ENCODE measurements at regions of chr7 and their contacts with region 1.

Region 1: DNA sequence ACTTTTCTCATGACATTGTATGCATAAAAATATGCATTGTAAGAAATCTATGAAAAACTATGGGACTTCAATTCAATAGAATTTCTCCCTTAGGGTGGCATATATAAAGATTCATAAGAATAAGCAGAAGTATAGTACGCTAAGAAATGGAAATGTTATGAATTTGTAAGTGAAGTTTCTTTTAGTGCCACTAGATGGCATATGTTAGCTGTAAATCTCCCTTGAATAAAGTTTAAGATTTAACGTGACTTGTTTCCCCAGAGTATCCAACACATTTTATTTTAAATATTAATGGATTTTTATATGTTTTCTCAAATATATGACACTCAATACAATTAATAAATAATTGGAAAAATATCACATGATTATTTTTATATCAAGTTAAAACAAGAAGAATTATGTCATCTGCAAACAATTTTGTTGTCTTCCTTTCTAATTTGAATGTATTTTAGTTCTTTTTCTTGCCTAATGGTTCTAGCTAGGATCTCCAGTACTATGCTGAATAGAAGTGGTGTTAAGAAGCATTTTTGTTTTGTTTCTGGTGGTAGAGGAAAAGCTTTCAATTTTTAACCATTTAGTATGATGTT is 287.2 kb downstream of the HGF start:
- DNase-seq: no peak
- ATAC-seq: peak in 1 of 4 donors; percentile 37
- H3K4me3 ChIP-seq: no peak overlapping the region
- H3K27ac ChIP-seq: no peak overlapping the region
- H3K4me1 ChIP-seq: peaks cover 0 to 21% (median 4%) of the 10 kb centered on the region in 12 donors
- H3K27me3 ChIP-seq: no peaks in the 10 kb centered on the region
- CTCF ChIP-seq: peak; percentile 51 to 79 (median 70)
- POLR2A ChIP-seq: no peak

Region 2: GRCh38 chr7:81094952-81095351 is 387.7 kb before region 1 on chr7:
- intact Hi-C with region 1: no loop called
- DNase-seq: no peak
- ATAC-seq: no peak
- H3K4me3 ChIP-seq: no peak overlapping the region
- H3K27ac ChIP-seq: no peak overlapping the region
- H3K4me1 ChIP-seq: no peaks in the 10 kb centered on the region
- H3K27me3 ChIP-seq: no peaks in the 10 kb centered on the region
- CTCF ChIP-seq: no peak
- POLR2A ChIP-seq: no peak

Region 3: DNA sequence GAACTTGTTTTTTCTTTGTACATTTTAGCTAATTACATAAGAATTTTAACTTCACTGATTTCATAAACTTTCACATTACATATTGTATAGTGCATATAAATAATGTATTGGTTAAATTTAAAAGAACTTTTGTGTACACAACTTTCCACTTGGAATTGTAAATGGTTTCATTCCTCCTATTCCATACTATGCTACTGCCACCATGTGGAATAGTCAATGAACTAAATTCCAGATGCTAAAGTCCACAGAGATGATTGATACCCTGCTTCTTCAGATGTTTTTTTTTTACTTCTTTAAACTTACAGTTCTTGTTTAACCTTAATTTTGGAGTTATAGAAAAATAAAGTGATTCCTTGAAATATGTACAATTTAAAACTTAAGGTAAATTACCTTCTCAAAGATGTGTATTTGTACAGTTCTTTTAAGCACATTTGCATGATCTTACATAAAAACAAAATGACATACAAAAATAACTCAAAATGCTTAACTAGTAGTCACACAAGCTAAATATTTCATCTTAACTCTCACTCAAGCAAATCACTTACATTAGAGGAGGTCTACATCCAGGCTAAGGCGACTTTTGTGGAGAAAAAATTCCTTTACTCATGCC is 534.7 kb after region 1 on chr7:
- intact Hi-C with region 1: loop called in 6 of 10 experiments (anchors 5 to 10 kb)
- DNase-seq: no peak
- ATAC-seq: no peak
- H3K4me3 ChIP-seq: no peak overlapping the region
- H3K27ac ChIP-seq: no peak overlapping the region
- H3K4me1 ChIP-seq: peaks cover 0 to 28% (median 2%) of the 10 kb centered on the region in 12 donors
- H3K27me3 ChIP-seq: no peaks in the 10 kb centered on the region
- CTCF ChIP-seq: peak; percentile 11 to 55 (median 42)
- POLR2A ChIP-seq: no peak

Region 4: DNA sequence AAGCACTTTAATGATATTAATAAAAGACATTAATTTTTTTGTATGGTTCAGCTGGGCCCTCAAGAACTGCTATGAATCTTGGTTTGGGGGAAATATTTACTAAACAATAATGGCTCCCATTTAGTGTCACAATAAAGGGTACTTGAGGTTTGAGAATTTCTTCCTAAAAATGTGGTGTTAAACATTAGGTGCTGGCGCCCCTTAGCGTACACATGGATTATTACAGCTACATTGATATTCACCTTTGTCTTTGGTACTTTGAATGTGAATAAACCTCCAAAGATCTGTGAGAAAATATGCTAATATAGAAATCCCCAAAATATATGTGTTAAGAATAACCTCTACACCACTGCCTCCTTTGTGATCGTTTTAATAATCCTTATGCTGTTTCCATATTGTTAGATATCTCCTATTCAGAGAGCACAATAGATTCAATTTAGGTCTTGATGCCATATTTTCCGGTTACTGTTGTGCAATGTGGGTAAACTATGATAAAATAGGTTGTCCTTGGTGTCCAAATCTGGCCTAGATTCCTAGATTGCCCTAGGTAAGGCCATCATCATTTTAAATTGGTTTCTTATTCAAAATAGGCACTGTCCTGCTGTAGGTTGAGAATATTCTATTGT is 1122.7 kb after region 1 on chr7:
- intact Hi-C with region 1: loop called in 2 of 10 experiments (anchors 5 to 10 kb)
- DNase-seq: no peak
- ATAC-seq: no peak
- H3K4me3 ChIP-seq: no peak overlapping the region
- H3K27ac ChIP-seq: no peak overlapping the region
- H3K4me1 ChIP-seq: no peaks in the 10 kb centered on the region
- H3K27me3 ChIP-seq: no peaks in the 10 kb centered on the region
- CTCF ChIP-seq: peak; percentile 50 to 82 (median 68)
- POLR2A ChIP-seq: no peak

Measured in heart left ventricle (tissue), 16 donors.